GM12878 (cell line): ENCODE measurements at regions of chr17 and their contacts with region 1.

Region 1: DNA sequence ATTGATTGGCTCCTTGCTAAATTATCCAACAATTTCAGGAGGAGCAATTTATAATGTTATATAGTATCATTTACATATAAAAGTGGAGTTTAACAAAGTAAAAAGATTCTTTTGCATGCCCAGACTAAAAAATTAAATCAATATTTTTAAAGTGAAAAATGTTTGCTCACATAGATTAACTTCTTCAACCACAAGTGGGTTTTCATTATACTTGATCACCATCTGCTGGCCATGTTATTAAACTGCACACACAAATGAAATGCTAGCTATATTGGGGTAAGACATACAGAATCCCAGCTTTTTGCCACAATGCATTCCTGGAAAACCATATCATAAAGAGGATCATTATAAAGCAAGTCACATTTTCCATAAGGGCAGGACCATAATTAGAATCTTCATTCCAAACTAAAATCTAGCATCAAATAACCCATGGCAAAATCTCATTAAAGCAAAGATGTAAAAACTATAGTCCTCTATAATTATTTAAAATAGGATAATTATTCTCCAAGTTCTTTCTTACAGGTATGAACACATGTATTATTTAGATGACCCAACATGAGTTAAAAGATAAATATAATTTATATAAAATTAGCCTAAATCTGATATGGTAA is 26.3 kb downstream of the CEP112 start:
- DNase-seq: peak; percentile 5
- ATAC-seq: peak; percentile 53; the same call in 2 of the 3 replicates
- H3K4me3 ChIP-seq: no peak overlapping the region
- H3K27ac ChIP-seq: no peak overlapping the region
- H3K4me1 ChIP-seq: no peaks in the 10 kb centered on the region
- H3K27me3 ChIP-seq: no peaks in the 10 kb centered on the region; a peak in 1 of 4 replicates
- CTCF ChIP-seq: peak; percentile 54 to 73 (median 56); a peak in 5 of 6 replicates
- EP300 ChIP-seq: no peak
- POLR2A ChIP-seq: no peak
- RAD21 ChIP-seq: peak; percentile 91

Region 2: GRCh38 chr17:65294179-65294720 is 871.4 kb before region 1 on chr17:
- CTCF ChIA-PET with region 1: interaction called, 76 read pairs
- POLR2A ChIA-PET with region 1: no interaction called
- RAD21 ChIA-PET with region 1: interaction called, 45 read pairs
- SMC1A ChIA-PET with region 1: interaction called, 35 read pairs
- in situ Hi-C with region 1: loop called (anchors 5 kb)
- intact Hi-C with region 1: loop called (anchors 1 kb)
- DNase-seq: no peak
- ATAC-seq: peak; percentile 99
- H3K4me3 ChIP-seq: no peak overlapping the region
- H3K27ac ChIP-seq: no peak overlapping the region
- H3K4me1 ChIP-seq: no peaks in the 10 kb centered on the region
- H3K27me3 ChIP-seq: no peaks in the 10 kb centered on the region
- CTCF ChIP-seq: peak; percentile 82 to 87 (median 85)
- EP300 ChIP-seq: no peak
- POLR2A ChIP-seq: no peak
- RAD21 ChIP-seq: peak; percentile 88